ENCODE measurements at regions of chr4 and their contacts with region 1.

Region 1: GRCh38 chr4:42282081-42282901 is 115.0 kb upstream of the SHISA3 start:
- DNase-seq: no peak
- ATAC-seq: peak; percentile 50
- H3K4me3 Mint-ChIP-seq: peak overlapping the region; percentile 3
- H3K27ac Mint-ChIP-seq: no peak overlapping the region
- H3K4me1 Mint-ChIP-seq: peaks cover 16% of the 10 kb centered on the region
- H3K27me3 Mint-ChIP-seq: peaks cover 15% of the 10 kb centered on the region
- CTCF ChIP-seq: no peak

Region 2: DNA sequence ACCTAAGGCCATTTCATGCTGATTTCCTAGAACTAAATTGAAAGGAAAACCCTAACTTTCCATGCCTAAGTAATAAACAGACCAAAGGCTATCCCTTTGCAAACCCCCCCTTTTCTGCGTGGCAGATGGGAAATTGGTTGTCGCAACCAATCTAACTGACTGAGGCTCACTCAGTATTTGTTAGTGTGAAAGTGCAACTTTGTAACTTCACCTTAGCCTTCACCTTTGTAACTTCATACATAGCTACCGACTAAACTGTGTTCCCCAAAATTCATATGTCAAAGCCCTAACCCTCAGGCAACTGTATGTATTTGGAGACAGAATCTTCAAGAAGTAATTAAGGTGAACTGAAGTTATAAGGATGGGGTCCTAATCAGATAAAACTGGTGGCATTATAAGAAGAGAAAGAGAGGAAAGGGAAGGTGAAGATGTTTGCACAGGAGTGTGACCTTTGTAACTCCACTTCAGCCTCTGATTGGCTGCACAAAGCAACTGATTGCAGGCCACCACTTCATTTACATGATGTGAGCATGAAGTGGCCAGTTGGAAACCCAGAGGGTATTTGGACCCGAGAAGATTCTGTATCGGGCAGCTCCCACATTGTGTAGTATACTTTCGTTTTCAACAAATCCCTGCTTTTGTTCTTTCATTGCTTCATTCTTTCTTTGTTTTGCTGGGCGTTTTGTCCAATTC is 352.0 kb before region 1 on chr4:
- CTCF ChIA-PET with region 1: no interaction called
- POLR2A ChIA-PET with region 1: no interaction called
- intact Hi-C with region 1: no loop called
- DNase-seq: no peak
- ATAC-seq: no peak
- H3K4me3 Mint-ChIP-seq: no peak overlapping the region
- H3K27ac Mint-ChIP-seq: no peak overlapping the region
- H3K4me1 Mint-ChIP-seq: peaks cover 7% of the 10 kb centered on the region
- H3K27me3 Mint-ChIP-seq: peaks cover 10% of the 10 kb centered on the region
- CTCF ChIP-seq: no peak

Region 3: GRCh38 chr4:41957634-41958033 is 324.7 kb before region 1 on chr4:
- CTCF ChIA-PET with region 1: interaction called, 7 read pairs
- POLR2A ChIA-PET with region 1: no interaction called
- intact Hi-C with region 1: loop called (anchors 1 kb)
- DNase-seq: no peak
- ATAC-seq: peak; percentile 40
- H3K4me3 Mint-ChIP-seq: no peak overlapping the region
- H3K27ac Mint-ChIP-seq: no peak overlapping the region
- H3K4me1 Mint-ChIP-seq: no peaks in the 10 kb centered on the region
- H3K27me3 Mint-ChIP-seq: no peaks in the 10 kb centered on the region
- CTCF ChIP-seq: no peak

Region 4: GRCh38 chr4:42234817-42235216 is 47.5 kb before region 1 on chr4:
- CTCF ChIA-PET with region 1: no interaction called
- POLR2A ChIA-PET with region 1: no interaction called
- intact Hi-C with region 1: no loop called
- DNase-seq: no peak
- ATAC-seq: no peak
- H3K4me3 Mint-ChIP-seq: no peak overlapping the region
- H3K27ac Mint-ChIP-seq: no peak overlapping the region
- H3K4me1 Mint-ChIP-seq: no peaks in the 10 kb centered on the region
- H3K27me3 Mint-ChIP-seq: no peaks in the 10 kb centered on the region
- CTCF ChIP-seq: no peak

Region 5: DNA sequence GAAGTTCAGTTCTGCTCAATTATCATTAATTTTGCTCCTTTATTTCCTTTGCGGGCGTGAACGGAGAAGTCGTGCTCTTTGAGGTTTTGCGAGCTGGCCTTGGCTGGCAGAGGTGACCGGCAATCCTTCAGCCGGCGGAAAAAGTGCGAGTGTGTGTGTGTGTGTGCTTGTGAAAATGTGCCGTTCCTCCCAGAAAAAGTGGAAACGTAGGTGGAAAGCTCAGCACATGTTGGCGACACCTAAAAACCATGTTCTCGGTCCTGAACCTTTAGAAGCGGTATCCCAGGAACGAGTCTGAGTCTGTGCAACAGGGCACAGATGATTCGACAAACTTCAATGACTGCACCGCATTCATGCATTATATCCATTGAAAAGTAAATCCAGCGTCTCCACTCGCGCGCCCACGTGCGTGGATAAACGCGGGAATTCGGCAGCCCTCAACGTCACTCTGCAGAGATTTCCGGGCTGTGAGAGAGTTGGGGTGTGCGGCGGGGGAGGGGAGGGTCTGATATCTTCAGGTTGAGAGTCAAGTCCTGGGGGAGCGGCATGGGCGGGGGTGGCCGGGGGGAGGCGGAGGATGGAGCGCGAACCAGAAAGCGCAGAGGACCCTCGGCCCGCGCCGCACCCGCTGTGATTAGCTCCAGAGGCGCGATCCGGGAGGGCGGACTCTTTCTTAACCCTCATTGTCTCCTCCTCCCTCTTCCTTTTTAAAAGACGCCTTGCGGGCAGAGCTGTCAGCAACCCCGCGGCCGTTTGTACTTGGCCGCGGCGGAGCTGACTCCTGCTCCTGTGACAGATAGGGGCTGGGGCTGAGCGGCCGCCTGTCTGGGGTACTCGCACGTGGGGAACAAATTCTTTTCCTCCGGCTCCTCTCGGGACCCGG is 114.7 kb after region 1 on chr4 and contains the start of gene SHISA3:
- CTCF ChIA-PET with region 1: no interaction called
- POLR2A ChIA-PET with region 1: no interaction called
- intact Hi-C with region 1: loop called (anchors 5 kb)
- DNase-seq: no peak
- ATAC-seq: peak; percentile 40
- H3K4me3 Mint-ChIP-seq: peak within 1 kb of the TSS; percentile 89
- H3K27ac Mint-ChIP-seq: no peak within 1 kb of the TSS
- H3K4me1 Mint-ChIP-seq: peaks cover 39% of the 10 kb centered on the region
- H3K27me3 Mint-ChIP-seq: peaks cover 45% of the 10 kb centered on the region
- CTCF ChIP-seq: no peak
- total RNA-seq, gene SHISA3: not detected in 2 replicates

Region 6: GRCh38 chr4:42519803-42520417 is 237.6 kb after region 1 on chr4:
- CTCF ChIA-PET with region 1: interaction called, 7 read pairs
- POLR2A ChIA-PET with region 1: no interaction called
- intact Hi-C with region 1: loop called (anchors 1 kb)
- DNase-seq: no peak
- ATAC-seq: peak; percentile 42
- H3K4me3 Mint-ChIP-seq: no peak overlapping the region
- H3K27ac Mint-ChIP-seq: no peak overlapping the region
- H3K4me1 Mint-ChIP-seq: peaks cover 6% of the 10 kb centered on the region
- H3K27me3 Mint-ChIP-seq: no peaks in the 10 kb centered on the region
- CTCF ChIP-seq: peak; percentile 59

Region 7: GRCh38 chr4:42865572-42866189 is 583.4 kb after region 1 on chr4:
- CTCF ChIA-PET with region 1: interaction called, 4 read pairs
- POLR2A ChIA-PET with region 1: no interaction called
- intact Hi-C with region 1: loop called (anchors 5 kb)
- DNase-seq: no peak
- ATAC-seq: no peak
- H3K4me3 Mint-ChIP-seq: no peak overlapping the region
- H3K27ac Mint-ChIP-seq: no peak overlapping the region
- H3K4me1 Mint-ChIP-seq: no peaks in the 10 kb centered on the region
- H3K27me3 Mint-ChIP-seq: peaks cover 14% of the 10 kb centered on the region
- CTCF ChIP-seq: peak; percentile 88

Measured in activated B cell treated with CpG ODN at 0.5 μM for 24 hours (primary cell).